AG04450 (cell line): ENCODE measurements at regions of chr12 and their contacts with region 1.

Region 1: GRCh38 chr12:49945394-49946080 is 5.0 kb upstream of the AQP2 start:
- DNase-seq: peak; percentile 21
- H3K4me3 ChIP-seq: peak overlapping the region; percentile 44
- H3K27ac ChIP-seq: no peak overlapping the region
- H3K27me3 ChIP-seq: peaks cover 13% of the 10 kb centered on the region
- CTCF ChIP-seq: peak; percentile 95

Region 2: DNA sequence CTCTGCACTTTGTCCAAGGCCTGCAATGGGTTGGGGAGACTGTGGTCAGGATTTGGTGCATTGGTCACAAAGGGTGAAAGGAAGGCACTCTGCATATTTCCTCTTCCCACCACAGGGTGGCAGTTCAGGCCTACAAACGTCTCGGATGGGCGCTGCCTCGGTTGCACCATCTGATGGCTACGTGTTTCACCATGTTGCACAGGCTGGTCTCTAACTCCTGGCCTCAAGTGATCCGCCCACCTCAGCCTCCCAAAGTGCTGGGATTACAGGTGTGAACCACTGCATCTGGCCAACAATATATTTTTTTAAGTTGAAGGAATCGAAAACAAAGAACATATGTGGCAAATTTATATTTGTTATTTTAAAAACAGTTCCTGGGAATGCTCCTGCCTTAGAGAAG is 169.1 kb before region 1 on chr12:
- CTCF ChIA-PET with region 1: interaction called, 10 read pairs
- POLR2A ChIA-PET with region 1: no interaction called
- DNase-seq: peak; percentile 56
- H3K4me3 ChIP-seq: no peak overlapping the region
- H3K27ac ChIP-seq: no peak overlapping the region
- H3K27me3 ChIP-seq: peaks cover 3% of the 10 kb centered on the region
- CTCF ChIP-seq: peak; percentile 87

Region 3: DNA sequence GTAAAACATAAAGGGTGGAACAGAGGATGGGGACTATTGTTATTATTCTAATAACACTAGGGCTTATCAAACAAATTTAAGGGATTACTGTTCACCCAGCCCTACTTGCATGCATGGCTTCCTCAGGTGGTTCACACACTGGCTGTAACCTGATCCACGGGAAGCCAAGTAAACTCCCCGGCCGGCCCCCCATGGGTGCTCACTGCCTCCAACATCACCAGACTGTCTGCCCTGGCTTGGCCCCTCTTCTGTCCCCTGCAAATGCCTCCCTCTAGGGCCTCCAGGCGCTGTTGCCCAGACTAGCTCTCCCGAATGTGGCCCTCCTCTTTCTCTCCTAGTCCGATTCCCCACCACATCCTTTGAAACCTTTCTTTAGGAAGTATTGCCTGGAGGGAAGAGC is 60.4 kb before region 1 on chr12:
- CTCF ChIA-PET with region 1: interaction called, 10 read pairs
- POLR2A ChIA-PET with region 1: no interaction called
- DNase-seq: no peak
- H3K4me3 ChIP-seq: no peak overlapping the region
- H3K27ac ChIP-seq: no peak overlapping the region
- H3K27me3 ChIP-seq: peaks cover 45% of the 10 kb centered on the region
- CTCF ChIP-seq: no peak

Region 4: DNA sequence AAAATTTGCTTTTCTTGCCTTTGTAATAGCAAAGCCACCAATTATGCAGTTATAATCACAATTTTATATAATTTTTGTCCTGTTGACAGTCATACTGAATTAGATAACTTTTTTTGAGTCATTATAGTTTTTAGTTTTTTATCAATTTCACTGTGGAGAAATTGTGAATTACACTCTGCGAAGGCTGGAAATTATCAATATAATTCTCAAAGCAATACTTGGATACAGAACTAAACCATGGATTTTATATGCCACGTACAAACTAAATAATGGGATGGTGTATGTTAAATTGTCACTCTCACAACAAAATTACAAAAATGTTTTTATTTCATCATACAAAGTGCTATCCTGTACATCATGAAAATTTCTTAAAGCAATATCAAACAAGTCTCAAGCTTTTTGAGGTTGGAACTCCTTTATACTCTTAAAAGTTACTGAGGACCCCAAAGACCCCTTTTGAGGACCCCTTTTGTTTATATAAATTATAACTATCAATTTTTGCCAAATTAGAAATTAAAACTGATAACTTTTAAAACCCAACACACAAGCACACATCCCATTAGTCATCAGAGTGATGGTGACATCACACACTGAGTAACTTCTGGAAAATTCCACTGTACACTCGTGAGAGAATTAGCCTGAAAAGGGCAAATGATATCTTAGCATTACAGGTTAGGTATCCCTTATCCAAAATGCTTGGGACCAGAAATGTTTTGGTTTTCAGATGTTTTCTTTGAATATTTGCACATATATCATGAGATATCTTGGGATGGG is 14.8 kb before region 1 on chr12:
- CTCF ChIA-PET with region 1: interaction called, 48 read pairs
- POLR2A ChIA-PET with region 1: no interaction called
- DNase-seq: no peak
- H3K4me3 ChIP-seq: no peak overlapping the region
- H3K27ac ChIP-seq: no peak overlapping the region
- H3K27me3 ChIP-seq: no peaks in the 10 kb centered on the region
- CTCF ChIP-seq: no peak

Region 5: GRCh38 chr12:49983892-49984291 is 38.4 kb after region 1 on chr12:
- CTCF ChIA-PET with region 1: interaction called, 13 read pairs
- POLR2A ChIA-PET with region 1: no interaction called
- DNase-seq: peak; percentile 67
- H3K4me3 ChIP-seq: no peak overlapping the region; the same call in 1 of the 2 replicates
- H3K27ac ChIP-seq: peak overlapping the region; percentile 47
- H3K27me3 ChIP-seq: no peaks in the 10 kb centered on the region
- CTCF ChIP-seq: 0 out of 2 replicates have a peak, but pooled peaks have one; percentile 6

Region 6: GRCh38 chr12:50246873-50247612 is 301.5 kb after region 1 on chr12:
- CTCF ChIA-PET with region 1: no interaction called
- POLR2A ChIA-PET with region 1: no interaction called
- DNase-seq: peak; percentile 87
- H3K4me3 ChIP-seq: no peak overlapping the region
- H3K27ac ChIP-seq: peak overlapping the region; percentile 90
- H3K27me3 ChIP-seq: no peaks in the 10 kb centered on the region
- CTCF ChIP-seq: no peak